ENCODE measurements at regions of chr6 and their contacts with region 1.

Region 1: DNA sequence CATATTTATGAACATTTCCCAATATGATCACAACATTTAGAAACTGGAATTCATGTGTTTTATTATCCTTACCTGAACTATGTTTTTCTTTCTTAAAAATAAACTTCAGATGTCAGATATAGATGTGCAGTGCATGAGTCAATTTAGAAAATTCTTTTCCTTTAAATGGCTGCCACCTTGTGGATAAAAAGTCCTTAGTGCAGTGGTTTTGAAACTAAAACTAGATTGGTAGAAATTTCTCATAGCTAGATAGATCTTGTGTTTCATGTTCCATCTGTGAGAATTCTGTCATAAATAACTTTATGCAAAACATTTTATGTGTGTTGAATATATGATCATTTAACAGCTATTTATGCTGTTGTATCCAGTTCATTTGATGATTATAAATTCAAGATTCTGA is 134.9 kb downstream of the KLHL32 start:
- DNase-seq: peak in 2 of 5 donors; percentile 6 to 22
- H3K4me3 ChIP-seq: no peak overlapping the region
- H3K4me3 Mint-ChIP-seq: no peak overlapping the region
- H3K27ac ChIP-seq: no peak overlapping the region
- H3K27ac Mint-ChIP-seq: no peak overlapping the region
- H3K4me1 ChIP-seq: no peaks in the 10 kb centered on the region
- H3K4me1 Mint-ChIP-seq: no peaks in the 10 kb centered on the region
- H3K27me3 ChIP-seq: no peaks in the 10 kb centered on the region
- H3K27me3 Mint-ChIP-seq: no peaks in the 10 kb centered on the region

Region 2: DNA sequence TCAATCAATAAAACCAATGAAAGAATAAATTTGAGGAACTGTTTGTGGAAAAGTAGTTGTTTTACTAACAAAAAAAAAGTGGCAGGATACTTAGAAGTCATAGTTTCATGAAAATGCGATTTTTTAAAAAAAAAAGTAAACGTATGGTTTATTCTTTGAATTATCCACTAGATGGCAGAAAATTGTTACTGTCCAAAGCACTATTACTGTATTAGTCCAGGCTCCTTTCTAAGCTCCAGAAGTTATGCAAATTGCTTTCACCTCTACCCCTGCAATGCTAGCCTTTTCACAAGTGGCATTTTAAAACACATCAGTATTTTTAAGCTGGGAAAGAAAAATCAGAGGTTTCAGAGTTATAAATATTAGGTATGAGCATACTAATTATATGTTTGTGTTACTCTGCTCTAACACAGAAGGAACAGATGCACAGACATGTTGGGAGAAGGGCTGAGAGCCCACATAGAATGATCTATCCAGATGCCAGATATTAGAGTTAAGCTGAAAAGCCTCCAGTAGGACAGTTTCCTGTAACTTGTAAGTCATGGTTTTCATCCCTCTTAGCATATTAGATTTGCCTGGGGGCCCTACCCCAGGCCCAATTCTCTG is 432.6 kb before region 1 on chr6:
- CTCF ChIA-PET with region 1: interaction called, 10 read pairs
- POLR2A ChIA-PET with region 1: interaction called, 6 read pairs
- DNase-seq: peak in 1 of 5 donors; percentile 3
- H3K4me3 ChIP-seq: no peak overlapping the region
- H3K4me3 Mint-ChIP-seq: no peak overlapping the region
- H3K27ac ChIP-seq: no peak overlapping the region
- H3K27ac Mint-ChIP-seq: peak overlapping the region in 1 of 8 donors; percentile 10
- H3K4me1 ChIP-seq: no peaks in the 10 kb centered on the region
- H3K4me1 Mint-ChIP-seq: no peaks in the 10 kb centered on the region
- H3K27me3 ChIP-seq: no peaks in the 10 kb centered on the region
- H3K27me3 Mint-ChIP-seq: peaks cover 2 to 17% of the 10 kb centered on the region in 2 donors

Region 3: GRCh38 chr6:97186416-97186999 is 127.0 kb after region 1 on chr6:
- CTCF ChIA-PET with region 1: no interaction called
- POLR2A ChIA-PET with region 1: no interaction called
- DNase-seq: peak; percentile 37 to 66 (median 45)
- H3K4me3 ChIP-seq: no peak overlapping the region
- H3K4me3 Mint-ChIP-seq: no peak overlapping the region
- H3K27ac ChIP-seq: no peak overlapping the region
- H3K27ac Mint-ChIP-seq: no peak overlapping the region
- H3K4me1 ChIP-seq: no peaks in the 10 kb centered on the region
- H3K4me1 Mint-ChIP-seq: no peaks in the 10 kb centered on the region
- H3K27me3 ChIP-seq: no peaks in the 10 kb centered on the region
- H3K27me3 Mint-ChIP-seq: no peaks in the 10 kb centered on the region